GM10248 (cell line): ENCODE measurements at regions of chr1 and their contacts with region 1.

Region 1: GRCh38 chr1:101238681-101239094 is 1.9 kb downstream of the S1PR1 start:
- DNase-seq: peak; percentile 75
- CTCF ChIP-seq: peak; percentile 93

Region 2: GRCh38 chr1:101136739-101137138 is 101.9 kb before region 1 on chr1:
- CTCF ChIA-PET with region 1: interaction called, 18 read pairs
- POLR2A ChIA-PET with region 1: no interaction called
- DNase-seq: peak; percentile 15
- CTCF ChIP-seq: peak; percentile 31

Region 3: GRCh38 chr1:101203820-101204540 is 34.7 kb before region 1 on chr1:
- CTCF ChIA-PET with region 1: interaction called, 19 read pairs
- POLR2A ChIA-PET with region 1: interaction called, 3 read pairs
- DNase-seq: no peak
- CTCF ChIP-seq: no peak

Region 4: DNA sequence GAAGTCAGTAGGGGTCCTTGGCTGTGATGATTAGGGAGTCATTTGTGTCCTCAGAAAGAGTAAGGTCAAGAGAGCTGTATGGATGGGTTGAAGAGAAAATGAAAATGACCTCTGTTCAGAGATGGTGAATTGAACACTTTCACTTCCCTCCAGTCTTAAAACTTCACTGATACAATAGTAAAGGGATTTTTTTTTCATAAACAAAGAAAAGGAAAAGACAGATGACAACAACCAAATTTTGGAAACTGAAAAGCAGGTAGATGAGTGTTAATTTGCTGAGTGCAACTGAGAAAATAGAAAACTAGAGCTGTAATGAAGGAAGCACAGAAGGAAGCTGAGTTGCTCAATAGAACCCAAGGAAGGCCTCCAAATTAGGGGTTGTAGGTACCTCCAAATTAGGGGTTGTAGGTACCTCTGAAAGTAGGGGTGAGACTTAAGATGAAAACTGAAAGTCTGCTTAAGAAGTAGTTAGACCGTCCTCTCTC is 16.7 kb before region 1 on chr1:
- CTCF ChIA-PET with region 1: interaction called, 16 read pairs
- POLR2A ChIA-PET with region 1: no interaction called
- DNase-seq: peak; percentile 74
- CTCF ChIP-seq: no peak

Region 5: DNA sequence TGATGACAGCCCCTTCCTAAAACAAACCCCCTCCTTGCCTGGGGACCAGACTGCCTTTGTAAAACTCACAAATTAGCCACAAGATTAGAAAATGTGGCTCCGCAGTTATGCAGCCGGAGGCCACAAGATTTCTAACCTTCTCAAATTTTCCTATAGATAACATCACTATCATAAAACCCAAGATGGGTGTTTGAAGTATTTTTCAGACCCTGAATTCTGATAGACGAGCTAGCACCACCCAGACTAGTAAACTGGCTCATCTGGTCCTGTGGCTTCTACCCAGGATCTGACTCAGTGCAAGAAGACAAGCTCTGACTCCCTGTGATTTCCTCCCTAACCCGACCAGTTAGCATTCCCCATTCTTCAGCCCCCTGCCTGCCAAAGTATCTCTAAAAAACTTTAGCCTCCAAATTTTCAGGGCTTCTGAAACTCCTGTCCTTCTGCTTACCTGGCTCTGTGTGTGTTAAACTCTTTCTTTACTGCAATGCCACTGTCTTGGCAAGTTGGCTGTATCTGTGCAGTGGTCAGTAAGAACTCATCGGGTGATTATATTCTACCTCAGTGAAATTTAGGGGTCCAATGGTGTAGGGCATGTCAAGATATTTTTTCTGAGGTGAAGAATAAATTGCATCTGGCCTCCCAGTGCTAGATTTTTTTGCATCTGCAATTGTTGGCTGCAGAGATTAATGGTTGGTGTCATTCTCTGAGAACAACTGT is 100.2 kb after region 1 on chr1:
- CTCF ChIA-PET with region 1: no interaction called
- POLR2A ChIA-PET with region 1: no interaction called
- DNase-seq: no peak
- CTCF ChIP-seq: no peak

Region 6: DNA sequence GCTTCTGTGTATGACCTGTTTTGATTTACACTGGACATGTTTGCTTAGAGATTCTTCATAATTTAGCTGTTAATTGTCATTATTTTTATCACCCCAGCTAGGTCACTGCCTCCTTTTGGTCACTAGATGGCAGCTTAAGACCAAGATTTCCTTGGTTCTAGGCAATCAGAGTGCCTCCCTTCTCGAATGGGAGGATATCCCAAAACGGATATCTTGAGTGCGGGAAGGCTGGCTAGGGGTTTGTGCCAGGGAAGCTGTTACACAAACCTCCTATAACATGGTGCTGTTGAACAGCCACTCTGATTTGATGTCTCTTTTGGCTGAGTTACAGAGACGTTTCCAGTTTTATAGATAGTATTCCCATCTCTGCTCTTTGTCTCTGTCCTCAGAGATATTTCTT is 281.6 kb after region 1 on chr1:
- CTCF ChIA-PET with region 1: no interaction called
- POLR2A ChIA-PET with region 1: no interaction called
- DNase-seq: peak; percentile 32
- CTCF ChIP-seq: peak; percentile 81